Activated CD4-positive, alpha-beta memory T cell treated with anti-CD3 and anti-CD28 coated beads for 36 hours (primary cell): ENCODE measurements at regions of chr6 and their contacts with region 1.

Region 1: DNA sequence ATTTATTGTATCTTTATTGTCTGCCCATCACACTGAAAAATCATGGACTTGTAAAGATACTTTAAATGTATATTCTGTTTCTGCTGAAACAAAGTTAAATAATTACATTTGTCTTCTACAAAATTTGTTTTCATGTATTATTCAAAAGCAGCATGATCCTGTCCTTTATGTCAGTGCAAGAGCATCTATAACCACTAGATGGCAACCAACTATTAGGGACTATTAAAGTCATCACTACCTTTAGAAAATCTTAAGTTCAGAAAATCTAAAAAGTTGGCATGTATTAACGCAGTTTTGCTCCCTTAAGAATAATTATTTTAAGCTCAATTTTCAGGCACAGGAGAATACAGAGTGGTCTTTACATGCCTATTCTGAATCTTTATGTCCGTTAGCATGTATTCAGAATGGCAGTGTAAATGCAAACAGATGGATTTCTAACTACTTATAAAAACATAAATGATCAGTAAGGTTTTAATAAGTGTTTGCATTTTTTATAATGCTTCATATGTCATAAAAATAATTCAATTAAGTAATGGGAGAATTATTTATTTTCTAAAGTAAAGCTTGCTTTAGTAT is 17.8 kb downstream of the TMEM30A start:
- DNase-seq: no peak
- H3K4me3 Mint-ChIP-seq: no peak overlapping the region
- H3K27ac Mint-ChIP-seq: no peak overlapping the region
- H3K4me1 Mint-ChIP-seq: peaks cover 38% of the 10 kb centered on the region
- H3K27me3 Mint-ChIP-seq: no peaks in the 10 kb centered on the region

Region 2: DNA sequence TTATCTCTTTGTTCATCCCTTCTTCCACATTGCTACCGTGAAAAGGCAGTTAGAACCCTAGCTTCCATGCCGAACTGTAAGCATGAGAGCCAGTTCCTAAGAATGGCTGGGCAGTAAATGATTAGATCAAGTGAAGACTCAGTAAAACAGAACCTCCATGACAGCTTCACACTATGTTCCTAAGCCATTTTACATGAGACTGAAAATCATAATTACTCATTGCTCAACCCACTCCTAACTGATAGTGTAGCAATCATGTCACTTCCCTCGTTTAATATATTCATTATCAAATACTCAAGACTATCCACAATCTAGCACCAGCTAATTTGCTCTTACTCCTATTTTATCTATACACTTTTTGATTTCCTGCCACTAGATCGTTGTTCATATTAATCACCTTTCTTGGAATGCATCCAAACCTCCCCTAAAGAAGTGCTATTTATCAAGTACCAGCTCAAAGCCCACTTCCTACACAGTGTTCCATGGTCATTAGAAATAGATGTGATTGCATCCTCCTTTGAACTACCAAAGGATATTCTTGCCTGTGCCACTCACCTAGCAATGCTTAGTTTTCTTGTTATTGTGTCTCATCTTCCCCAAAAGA is 11.8 kb after region 1 on chr6:
- CTCF ChIA-PET with region 1: interaction called, 48 read pairs
- POLR2A ChIA-PET with region 1: interaction called, 5 read pairs
- intact Hi-C with region 1: loop called (anchors 1 kb)
- DNase-seq: no peak
- H3K4me3 Mint-ChIP-seq: peak overlapping the region; percentile 0
- H3K27ac Mint-ChIP-seq: peak overlapping the region; percentile 34
- H3K4me1 Mint-ChIP-seq: peaks cover 70% of the 10 kb centered on the region
- H3K27me3 Mint-ChIP-seq: no peaks in the 10 kb centered on the region

Region 3: DNA sequence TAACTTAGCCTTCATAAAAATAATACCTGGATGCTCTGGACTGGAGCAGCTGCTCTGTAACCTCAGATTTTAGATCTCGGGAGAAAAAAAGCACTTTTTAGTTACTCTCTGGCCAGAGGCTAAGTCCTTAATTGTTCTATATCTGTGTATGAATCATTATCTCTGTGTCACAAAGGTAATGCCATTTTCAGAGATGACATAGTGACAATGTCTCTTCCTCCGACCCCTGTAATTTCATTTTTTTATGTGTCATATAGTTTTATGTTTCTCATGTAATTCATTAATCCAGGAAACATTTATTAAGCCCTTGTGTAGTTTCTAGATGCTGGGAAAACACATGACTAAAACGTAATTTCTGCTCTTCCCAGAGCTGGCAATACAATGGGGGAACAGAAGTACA is 390.5 kb after region 1 on chr6:
- CTCF ChIA-PET with region 1: no interaction called
- POLR2A ChIA-PET with region 1: no interaction called
- intact Hi-C with region 1: no loop called
- DNase-seq: no peak
- H3K4me3 Mint-ChIP-seq: no peak overlapping the region
- H3K27ac Mint-ChIP-seq: no peak overlapping the region
- H3K4me1 Mint-ChIP-seq: no peaks in the 10 kb centered on the region
- H3K27me3 Mint-ChIP-seq: no peaks in the 10 kb centered on the region